ENCODE measurements at regions of chr14 and their contacts with region 1.

Region 1: DNA sequence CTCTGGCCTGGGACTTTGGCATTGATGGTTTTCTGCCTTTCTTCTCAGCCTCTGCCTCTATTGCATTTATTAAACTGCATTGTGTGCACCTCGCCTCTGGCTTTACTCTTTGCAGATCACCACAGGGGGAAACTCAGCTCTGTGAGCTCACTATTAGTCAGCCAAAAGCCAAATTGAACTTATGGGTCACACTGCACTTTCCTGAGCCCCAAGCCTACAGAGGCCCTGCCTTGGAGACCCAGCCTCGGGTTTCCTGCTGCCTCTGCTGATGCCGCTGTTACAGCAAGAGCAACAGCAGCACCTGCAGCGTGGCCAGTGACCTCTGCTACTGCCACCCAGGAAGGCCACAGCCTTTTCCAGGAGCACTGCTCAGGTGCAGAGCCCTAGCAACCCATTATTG is 122.5 kb downstream of the DAD1 start:
- DNase-seq: no peak
- H3K4me3 ChIP-seq: no peak overlapping the region
- H3K27ac ChIP-seq: no peak overlapping the region
- H3K4me1 ChIP-seq: peaks cover 0 to 3% (median 0%) of the 10 kb centered on the region in 4 donors
- H3K27me3 ChIP-seq: no peaks in the 10 kb centered on the region
- CTCF ChIP-seq: no peak
- EP300 ChIP-seq: no peak
- POLR2A ChIP-seq: no peak

Region 2: DNA sequence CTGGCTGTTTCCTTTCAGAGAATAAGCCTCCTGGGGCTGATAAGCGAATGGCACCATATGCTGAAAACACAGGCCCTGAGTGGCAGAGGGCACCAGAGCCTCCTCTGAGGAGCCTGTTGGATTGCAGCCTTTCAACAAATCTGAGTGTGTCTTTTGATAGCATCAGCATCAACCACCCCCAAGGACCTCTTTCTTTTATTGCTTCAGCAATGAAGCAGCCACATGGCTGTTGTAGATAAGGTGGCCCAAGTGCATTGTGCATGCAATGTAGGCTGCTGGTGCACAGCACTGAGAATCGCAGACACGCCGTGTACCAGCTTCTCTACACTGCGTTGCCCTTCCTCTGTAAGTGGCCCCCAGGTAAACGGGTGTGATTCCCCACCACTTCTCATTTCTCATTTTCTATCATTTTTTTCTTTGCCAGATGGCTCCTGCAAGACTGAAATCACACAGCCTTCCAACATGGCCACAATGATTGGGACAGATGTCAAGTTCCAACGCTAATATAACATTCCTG is 69.2 kb before region 1 on chr14:
- in situ Hi-C with region 1: loop called in 3 of 4 experiments (anchors 5 kb)
- intact Hi-C with region 1: loop called (anchors 5 kb)
- DNase-seq: no peak
- H3K4me3 ChIP-seq: no peak overlapping the region
- H3K27ac ChIP-seq: no peak overlapping the region
- H3K4me1 ChIP-seq: peaks cover 0 to under 1% (median 0%) of the 10 kb centered on the region in 4 donors
- H3K27me3 ChIP-seq: no peaks in the 10 kb centered on the region
- CTCF ChIP-seq: no peak
- EP300 ChIP-seq: no peak
- POLR2A ChIP-seq: no peak

Region 3: DNA sequence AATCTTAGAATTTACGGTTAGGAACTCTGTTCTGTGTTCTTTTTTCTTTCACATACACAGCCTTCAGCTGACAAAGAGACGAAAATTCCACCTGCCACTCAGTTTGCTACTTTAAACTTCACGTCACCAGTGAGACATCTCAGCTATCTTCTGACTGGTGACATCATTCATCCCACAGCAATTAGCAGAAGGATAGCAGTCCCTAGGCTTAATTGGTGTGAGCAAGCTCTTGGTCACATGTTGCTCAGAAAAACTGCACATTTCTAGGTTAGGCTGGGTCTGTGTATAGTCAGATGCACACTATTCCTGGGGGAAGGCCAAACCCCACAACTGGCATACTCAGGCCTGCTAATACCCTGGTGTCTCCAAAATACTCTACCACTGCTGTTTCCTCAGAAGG is 324.8 kb after region 1 on chr14:
- in situ Hi-C with region 1: no loop called
- intact Hi-C with region 1: no loop called
- DNase-seq: no peak
- H3K4me3 ChIP-seq: no peak overlapping the region
- H3K27ac ChIP-seq: peak overlapping the region in 2 of 4 donors; percentile 9 to 46
- H3K4me1 ChIP-seq: no peaks in the 10 kb centered on the region
- H3K27me3 ChIP-seq: no peaks in the 10 kb centered on the region
- CTCF ChIP-seq: no peak
- EP300 ChIP-seq: no peak
- POLR2A ChIP-seq: no peak

Measured in transverse colon (tissue), 4 donors.